ENCODE measurements at regions of chr20 and their contacts with region 1.

Region 1: GRCh38 chr20:7272512-7272911 is 505.0 kb downstream of the BMP2 start:
- DNase-seq: no peak
- ATAC-seq: no peak
- H3K4me3 ChIP-seq: no peak overlapping the region
- H3K27ac ChIP-seq: no peak overlapping the region
- H3K4me1 ChIP-seq: no peaks in the 10 kb centered on the region
- H3K27me3 ChIP-seq: no peaks in the 10 kb centered on the region

Region 2: DNA sequence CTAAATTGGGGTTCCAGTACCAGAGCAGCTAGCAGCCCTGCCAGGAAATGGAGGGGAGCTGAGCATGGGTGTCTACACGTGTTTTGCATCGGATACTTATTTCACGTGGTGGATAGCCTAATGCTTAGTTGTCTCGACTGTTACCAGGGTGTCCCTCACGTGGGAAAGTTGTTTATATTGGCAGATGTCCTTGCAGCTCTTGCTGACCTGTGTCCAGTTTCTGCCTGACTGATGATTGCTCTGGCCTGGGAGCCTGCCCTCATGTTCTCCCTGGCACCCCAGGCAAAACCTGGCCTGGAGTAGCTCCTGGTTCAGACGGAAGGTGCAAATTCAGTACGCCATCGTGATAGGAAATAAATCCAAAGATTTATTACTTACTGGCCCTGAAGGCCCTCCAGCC is 1137.9 kb before region 1 on chr20:
- intact Hi-C with region 1: loop called in 1 of 4 experiments (anchors 10 kb)
- DNase-seq: no peak
- ATAC-seq: no peak
- H3K4me3 ChIP-seq: no peak overlapping the region
- H3K27ac ChIP-seq: no peak overlapping the region
- H3K4me1 ChIP-seq: no peaks in the 10 kb centered on the region
- H3K27me3 ChIP-seq: no peaks in the 10 kb centered on the region

Region 3: GRCh38 chr20:7171911-7172310 is 100.6 kb before region 1 on chr20:
- intact Hi-C with region 1: no loop called
- DNase-seq: no peak
- ATAC-seq: no peak
- H3K4me3 ChIP-seq: no peak overlapping the region
- H3K27ac ChIP-seq: no peak overlapping the region
- H3K4me1 ChIP-seq: no peaks in the 10 kb centered on the region
- H3K27me3 ChIP-seq: no peaks in the 10 kb centered on the region

Measured in right cardiac atrium (tissue), 5 donors.